ENCODE measurements at regions of chr1 and their contacts with region 1.

Region 1: GRCh38 chr1:25103164-25103795 is 129.0 kb downstream of the SYF2 start:
- DNase-seq: no peak
- H3K4me3 ChIP-seq: no peak overlapping the region
- H3K4me1 ChIP-seq: no peaks in the 10 kb centered on the region
- H3K27me3 ChIP-seq: peaks cover 4% of the 10 kb centered on the region; the same call in 1 of the 2 replicates

Region 2: GRCh38 chr1:24452922-24453485 is 650.3 kb before region 1 on chr1:
- in situ Hi-C with region 1: no loop called
- DNase-seq: no peak
- H3K4me3 ChIP-seq: no peak overlapping the region
- H3K4me1 ChIP-seq: no peaks in the 10 kb centered on the region
- H3K27me3 ChIP-seq: no peaks in the 10 kb centered on the region

Region 3: DNA sequence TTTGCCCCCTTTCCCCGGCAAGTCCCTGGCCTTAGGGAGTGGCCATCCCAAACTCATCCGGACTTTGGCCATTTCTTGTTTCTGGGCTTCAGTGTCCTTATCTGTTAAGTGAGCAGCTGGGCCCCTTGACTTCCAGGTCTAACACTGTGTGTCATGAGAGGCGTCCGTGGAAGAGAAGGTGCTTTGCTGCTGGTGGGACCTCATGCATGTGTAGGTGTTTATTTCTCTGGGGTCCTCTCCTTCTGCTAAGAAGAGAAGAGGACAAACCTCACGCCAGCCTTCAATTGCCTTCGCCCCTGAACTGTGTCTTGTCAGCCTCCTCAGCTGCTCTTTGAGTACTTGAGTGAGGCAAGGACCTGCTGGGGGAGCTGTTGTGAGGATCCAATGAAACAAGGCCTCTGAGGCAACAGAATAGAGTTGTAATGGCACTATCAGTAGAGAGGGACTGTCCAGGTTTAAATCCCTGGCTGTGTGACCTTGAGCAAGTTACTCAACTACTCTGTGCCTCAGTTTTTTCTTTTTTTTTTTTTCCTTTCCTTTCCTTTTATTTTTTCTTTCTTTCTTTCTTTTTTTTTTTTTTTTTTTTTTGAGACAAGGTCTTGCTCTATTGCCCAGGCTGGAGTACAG is 245.7 kb before region 1 on chr1:
- in situ Hi-C with region 1: loop called (anchors 5 kb)
- DNase-seq: no peak
- H3K4me3 ChIP-seq: no peak overlapping the region
- H3K4me1 ChIP-seq: no peaks in the 10 kb centered on the region
- H3K27me3 ChIP-seq: no peaks in the 10 kb centered on the region

Region 4: DNA sequence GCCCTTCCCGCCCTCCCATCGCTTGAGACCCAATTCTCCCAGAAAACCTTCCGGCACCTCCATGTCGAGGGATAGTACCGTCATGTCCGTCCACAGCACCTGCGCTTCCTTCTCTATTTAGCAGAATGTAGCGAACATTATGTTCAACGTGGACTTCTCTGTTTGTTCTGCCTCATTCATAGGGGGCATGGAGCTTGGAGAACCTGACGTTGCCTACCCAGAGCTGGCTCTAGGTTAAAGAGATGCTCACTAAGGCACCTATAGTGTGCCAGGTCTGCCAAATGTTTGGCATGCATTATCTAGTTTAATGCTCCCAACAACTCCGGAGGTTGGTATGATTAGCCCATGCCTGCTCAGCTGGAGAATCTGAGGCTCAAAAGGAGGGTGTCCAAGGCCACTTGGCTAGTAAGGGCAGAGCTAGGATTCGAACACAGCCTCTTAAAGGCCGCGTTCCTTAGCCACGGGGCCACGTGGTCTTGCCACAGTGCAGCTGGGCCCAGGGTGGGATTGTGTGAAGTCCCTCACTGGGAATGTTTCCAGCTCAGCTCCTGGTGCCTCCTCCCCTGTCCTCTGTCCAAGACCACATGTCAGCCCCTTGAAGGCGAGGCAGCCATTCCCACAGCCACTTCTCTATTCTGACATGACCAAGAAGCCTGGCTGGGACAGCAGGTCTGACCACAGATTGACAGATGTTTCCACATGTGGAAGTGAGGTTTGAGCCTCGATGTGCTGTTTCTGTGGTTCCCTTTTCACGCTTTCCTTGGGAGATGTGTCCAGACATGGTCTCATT is 231.0 kb before region 1 on chr1:
- in situ Hi-C with region 1: no loop called
- DNase-seq: no peak
- H3K4me3 ChIP-seq: no peak overlapping the region
- H3K4me1 ChIP-seq: no peaks in the 10 kb centered on the region; the same call in 1 of the 2 replicates
- H3K27me3 ChIP-seq: no peaks in the 10 kb centered on the region; the same call in 1 of the 2 replicates

Region 5: DNA sequence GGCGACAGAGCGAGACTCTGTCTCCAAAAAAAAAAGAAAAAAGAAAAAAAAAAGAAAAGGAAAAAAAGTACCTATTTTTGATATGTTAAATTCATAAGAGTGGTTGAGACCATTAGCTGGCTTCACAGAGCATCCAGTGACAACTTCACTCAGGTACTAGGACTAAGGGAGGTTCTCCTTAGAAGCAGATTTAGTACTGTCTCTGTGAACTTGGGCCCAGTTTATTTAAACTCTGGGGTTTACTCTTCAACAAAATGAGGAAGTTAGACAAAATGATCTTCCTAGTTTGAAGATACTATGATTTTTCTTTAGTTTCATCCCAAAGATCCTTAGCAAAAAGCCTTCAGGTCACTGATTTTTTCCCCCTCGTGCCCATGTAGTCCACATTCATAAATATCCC is 348.6 kb after region 1 on chr1:
- in situ Hi-C with region 1: no loop called
- DNase-seq: no peak
- H3K4me3 ChIP-seq: no peak overlapping the region
- H3K4me1 ChIP-seq: peaks cover 9% of the 10 kb centered on the region
- H3K27me3 ChIP-seq: no peaks in the 10 kb centered on the region

Measured in HAP-1 (cell line).